ENCODE measurements at regions of chr1 and their contacts with region 1.

Region 1: GRCh38 chr1:115426231-115426771 is 88.3 kb upstream of the NGF start:
- DNase-seq: peak; percentile 84 to 97
- H3K4me3 ChIP-seq: no peak overlapping the region
- H3K27ac ChIP-seq: peak overlapping the region; percentile 90
- H3K4me1 ChIP-seq: peaks cover 64% of the 10 kb centered on the region
- H3K27me3 ChIP-seq: no peaks in the 10 kb centered on the region
- CTCF ChIP-seq: no peak

Region 2: GRCh38 chr1:115166531-115167091 is 259.7 kb before region 1 on chr1:
- CTCF ChIA-PET with region 1: no interaction called
- POLR2A ChIA-PET with region 1: interaction called, 17 read pairs
- intact Hi-C with region 1: no loop called
- DNase-seq: peak in 1 of 2 experiments; percentile 60
- H3K4me3 ChIP-seq: no peak overlapping the region
- H3K27ac ChIP-seq: no peak overlapping the region
- H3K4me1 ChIP-seq: peaks cover 40% of the 10 kb centered on the region
- H3K27me3 ChIP-seq: no peaks in the 10 kb centered on the region
- CTCF ChIP-seq: no peak

Region 3: DNA sequence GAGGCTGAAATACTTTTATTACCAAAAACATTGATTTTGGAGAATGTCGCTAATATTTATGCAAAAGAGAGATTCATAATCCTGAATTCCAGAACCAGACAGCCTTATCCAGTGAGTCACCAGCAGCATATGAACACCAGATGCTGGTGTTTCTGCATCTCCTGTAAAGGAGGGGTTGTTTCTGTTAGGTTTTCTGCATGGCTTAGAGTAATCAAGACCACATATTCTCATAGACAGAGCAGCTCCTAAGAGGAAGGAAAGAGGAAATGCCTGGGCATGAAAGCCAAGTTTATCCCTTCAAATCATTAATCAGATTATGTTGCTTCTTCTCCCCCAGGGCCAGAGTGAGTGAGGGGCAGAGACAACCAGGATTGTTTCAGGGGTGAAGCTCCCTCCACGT is 174.4 kb before region 1 on chr1:
- CTCF ChIA-PET with region 1: interaction called, 18 read pairs
- POLR2A ChIA-PET with region 1: no interaction called
- intact Hi-C with region 1: no loop called
- DNase-seq: no peak
- H3K4me3 ChIP-seq: no peak overlapping the region
- H3K27ac ChIP-seq: no peak overlapping the region
- H3K4me1 ChIP-seq: no peaks in the 10 kb centered on the region
- H3K27me3 ChIP-seq: no peaks in the 10 kb centered on the region
- CTCF ChIP-seq: no peak

Region 4: GRCh38 chr1:115456441-115456961 is 30.2 kb after region 1 on chr1:
- CTCF ChIA-PET with region 1: interaction called, 3 read pairs
- POLR2A ChIA-PET with region 1: interaction called, 3 read pairs
- intact Hi-C with region 1: loop called (anchors 1 kb)
- DNase-seq: peak; percentile 41 to 65
- H3K4me3 ChIP-seq: no peak overlapping the region
- H3K27ac ChIP-seq: no peak overlapping the region
- H3K4me1 ChIP-seq: peaks cover 54% of the 10 kb centered on the region
- H3K27me3 ChIP-seq: no peaks in the 10 kb centered on the region
- CTCF ChIP-seq: no peak

Region 5: GRCh38 chr1:115496904-115497527 is 70.7 kb after region 1 on chr1:
- CTCF ChIA-PET with region 1: no interaction called
- POLR2A ChIA-PET with region 1: no interaction called
- intact Hi-C with region 1: loop called (anchors 1 kb)
- DNase-seq: peak; percentile 66 to 95
- H3K4me3 ChIP-seq: peak overlapping the region; percentile 19; the same call in 1 of the 2 replicates
- H3K27ac ChIP-seq: peak overlapping the region; percentile 85
- H3K4me1 ChIP-seq: peaks cover 68% of the 10 kb centered on the region
- H3K27me3 ChIP-seq: no peaks in the 10 kb centered on the region
- CTCF ChIP-seq: no peak

Measured in PC-9 (cell line).